Activated CD4-positive, alpha-beta memory T cell treated with anti-CD3 and anti-CD28 coated beads for 36 hours (primary cell): ENCODE measurements at regions of chr10 and their contacts with region 1.

Region 1: GRCh38 chr10:131981429-131982184 is at the start of gene BNIP3:
- DNase-seq: peak; percentile 95
- H3K4me3 Mint-ChIP-seq: peak within 1 kb of the TSS; percentile 82
- H3K27ac Mint-ChIP-seq: peak within 1 kb of the TSS; percentile 65
- H3K4me1 Mint-ChIP-seq: peaks cover 31% of the 10 kb centered on the region
- H3K27me3 Mint-ChIP-seq: no peaks in the 10 kb centered on the region
- total RNA-seq, gene BNIP3: 84.9 to 86.9 TPM

Region 2: GRCh38 chr10:131726076-131726880 is 255.3 kb before region 1 on chr10:
- CTCF ChIA-PET with region 1: no interaction called
- POLR2A ChIA-PET with region 1: no interaction called
- intact Hi-C with region 1: no loop called
- DNase-seq: peak; percentile 8
- H3K4me3 Mint-ChIP-seq: no peak overlapping the region
- H3K27ac Mint-ChIP-seq: no peak overlapping the region
- H3K4me1 Mint-ChIP-seq: no peaks in the 10 kb centered on the region
- H3K27me3 Mint-ChIP-seq: peaks cover 2% of the 10 kb centered on the region

Region 3: GRCh38 chr10:131892806-131893675 is 88.6 kb before region 1 on chr10:
- CTCF ChIA-PET with region 1: no interaction called
- POLR2A ChIA-PET with region 1: no interaction called
- intact Hi-C with region 1: no loop called
- DNase-seq: no peak
- H3K4me3 Mint-ChIP-seq: no peak overlapping the region
- H3K27ac Mint-ChIP-seq: no peak overlapping the region
- H3K4me1 Mint-ChIP-seq: peaks cover 11% of the 10 kb centered on the region
- H3K27me3 Mint-ChIP-seq: no peaks in the 10 kb centered on the region

Region 4: GRCh38 chr10:132158122-132158741 is 176.6 kb after region 1 on chr10:
- CTCF ChIA-PET with region 1: no interaction called
- POLR2A ChIA-PET with region 1: no interaction called
- intact Hi-C with region 1: loop called (anchors 10 kb)
- DNase-seq: peak; percentile 58
- H3K4me3 Mint-ChIP-seq: no peak overlapping the region
- H3K27ac Mint-ChIP-seq: peak overlapping the region; percentile 56
- H3K4me1 Mint-ChIP-seq: peaks cover 27% of the 10 kb centered on the region
- H3K27me3 Mint-ChIP-seq: no peaks in the 10 kb centered on the region

Region 5: GRCh38 chr10:132319853-132320669 is 338.5 kb after region 1 on chr10:
- CTCF ChIA-PET with region 1: no interaction called
- POLR2A ChIA-PET with region 1: no interaction called
- intact Hi-C with region 1: loop called (anchors 5 kb)
- DNase-seq: peak; percentile 79
- H3K4me3 Mint-ChIP-seq: peak overlapping the region; percentile 1
- H3K27ac Mint-ChIP-seq: peak overlapping the region; percentile 18
- H3K4me1 Mint-ChIP-seq: peaks cover 22% of the 10 kb centered on the region
- H3K27me3 Mint-ChIP-seq: no peaks in the 10 kb centered on the region